ENCODE measurements at regions of chr10 and their contacts with region 1.

Region 1: DNA sequence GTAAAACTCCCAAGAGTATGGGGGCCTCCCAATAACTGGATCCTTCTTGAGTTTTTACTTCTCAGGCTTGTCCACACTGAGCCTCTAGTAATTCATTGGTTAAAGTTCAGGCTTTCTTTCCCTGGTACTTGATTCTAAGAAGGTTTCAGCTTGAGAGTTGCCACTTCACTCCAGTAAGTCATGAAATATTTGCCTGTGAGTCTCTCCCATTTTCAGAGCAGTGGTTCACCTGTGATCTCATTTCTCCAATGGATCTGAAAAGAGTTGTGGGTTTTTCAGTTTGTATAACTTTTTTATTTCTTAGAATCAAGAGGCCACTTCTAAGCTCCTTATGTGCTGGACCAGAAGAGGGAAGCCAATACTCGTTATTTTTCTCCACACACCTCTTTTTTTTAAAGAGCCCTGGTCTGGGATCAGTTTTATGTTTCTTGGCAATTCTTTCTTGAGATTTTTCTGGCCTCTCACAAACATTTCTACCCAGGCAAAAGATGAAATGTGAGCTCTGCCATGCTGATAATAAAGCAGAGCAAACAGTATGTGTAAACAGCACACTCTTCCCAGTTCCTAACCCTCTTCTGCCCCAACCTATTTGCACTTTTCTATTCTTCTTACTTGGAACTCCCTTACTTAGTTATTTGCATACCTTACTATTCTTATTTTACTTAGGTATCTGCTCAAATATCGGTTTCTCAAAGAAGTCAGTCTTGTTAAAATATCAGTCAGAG is 983.4 kb downstream of the CCSER2 start:
- DNase-seq: no peak
- H3K4me3 ChIP-seq: no peak overlapping the region
- H3K27ac ChIP-seq: no peak overlapping the region
- H3K4me1 ChIP-seq: no peaks in the 10 kb centered on the region
- H3K27me3 ChIP-seq: no peaks in the 10 kb centered on the region
- CTCF ChIP-seq: no peak
- POLR2A ChIP-seq: no peak

Region 2: DNA sequence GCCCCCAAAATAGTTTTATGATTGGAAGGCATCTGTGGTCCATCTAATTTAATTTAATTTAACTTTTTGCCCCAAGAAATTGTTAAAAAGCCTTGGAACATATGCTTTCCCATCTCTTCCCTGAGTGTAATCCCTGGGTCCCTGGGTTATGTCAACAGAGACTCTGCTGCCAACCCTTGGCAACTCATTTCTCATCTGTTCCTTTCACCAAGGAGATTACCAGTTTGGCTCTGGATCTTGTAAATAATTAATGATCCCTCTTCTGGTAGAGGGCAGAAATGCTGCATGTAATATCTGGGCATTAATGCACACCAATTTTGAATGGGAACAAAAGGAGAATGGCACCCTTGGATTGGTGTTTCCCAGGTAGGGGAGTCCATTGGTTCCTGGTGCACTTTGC is 469.2 kb before region 1 on chr10:
- intact Hi-C with region 1: loop called (anchors 5 kb)
- DNase-seq: no peak
- H3K4me3 ChIP-seq: no peak overlapping the region
- H3K27ac ChIP-seq: no peak overlapping the region
- H3K4me1 ChIP-seq: no peaks in the 10 kb centered on the region
- H3K27me3 ChIP-seq: no peaks in the 10 kb centered on the region
- CTCF ChIP-seq: no peak
- POLR2A ChIP-seq: no peak

Region 3: DNA sequence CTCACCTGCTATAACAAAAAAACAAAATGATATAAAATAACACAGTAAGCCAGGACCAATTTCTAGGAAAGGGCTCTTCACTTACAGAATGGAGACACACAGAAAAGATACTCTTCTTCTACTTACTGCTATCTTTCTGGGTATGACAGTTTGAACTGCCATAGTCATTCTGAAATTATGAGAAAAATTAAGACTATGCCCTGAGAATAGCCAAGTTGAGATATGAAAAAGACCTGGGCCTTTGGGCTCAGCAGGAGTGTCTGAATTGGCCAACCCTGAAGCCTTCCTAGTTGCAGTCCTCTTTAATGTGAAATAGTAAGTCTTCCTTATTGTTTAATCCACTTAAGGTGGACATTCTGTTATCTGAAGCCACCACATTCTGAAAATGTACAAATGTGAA is 535.3 kb after region 1 on chr10:
- intact Hi-C with region 1: no loop called
- DNase-seq: no peak
- H3K4me3 ChIP-seq: no peak overlapping the region
- H3K27ac ChIP-seq: no peak overlapping the region
- H3K4me1 ChIP-seq: no peaks in the 10 kb centered on the region
- H3K27me3 ChIP-seq: no peaks in the 10 kb centered on the region
- CTCF ChIP-seq: no peak
- POLR2A ChIP-seq: no peak